WTC11 (cell line): ENCODE measurements at regions of chr15 and their contacts with region 1.

Region 1: GRCh38 chr15:91032919-91033803 is 10.8 kb upstream of the VPS33B start:
- DNase-seq: peak; percentile 92
- ATAC-seq: peak; percentile 94
- H3K4me3 Mint-ChIP-seq: peak overlapping the region; percentile 36
- H3K27ac Mint-ChIP-seq: peak overlapping the region; percentile 53; the same call in 1 of the 2 replicates
- H3K4me1 Mint-ChIP-seq: peaks cover 6% of the 10 kb centered on the region
- H3K27me3 Mint-ChIP-seq: peaks cover 11% of the 10 kb centered on the region
- CTCF ChIP-seq: peak; percentile 65

Region 2: GRCh38 chr15:90774731-90775484 is 258.3 kb before region 1 on chr15:
- CTCF ChIA-PET with region 1: no interaction called
- POLR2A ChIA-PET with region 1: no interaction called
- DNase-seq: no peak
- ATAC-seq: no peak
- H3K4me3 Mint-ChIP-seq: no peak overlapping the region
- H3K27ac Mint-ChIP-seq: no peak overlapping the region
- H3K4me1 Mint-ChIP-seq: no peaks in the 10 kb centered on the region
- H3K27me3 Mint-ChIP-seq: no peaks in the 10 kb centered on the region
- CTCF ChIP-seq: no peak

Region 3: GRCh38 chr15:90902040-90902839 is 130.9 kb before region 1 on chr15:
- CTCF ChIA-PET with region 1: interaction called, 14 read pairs
- POLR2A ChIA-PET with region 1: no interaction called
- DNase-seq: peak; percentile 78
- ATAC-seq: peak; percentile 77
- H3K4me3 Mint-ChIP-seq: peak overlapping the region; percentile 70
- H3K27ac Mint-ChIP-seq: peak overlapping the region; percentile 41; the same call in 1 of the 2 replicates
- H3K4me1 Mint-ChIP-seq: peaks cover 23% of the 10 kb centered on the region
- H3K27me3 Mint-ChIP-seq: peaks cover 26% of the 10 kb centered on the region
- CTCF ChIP-seq: no peak

Region 4: GRCh38 chr15:90986807-90987507 is 46.2 kb before region 1 on chr15:
- CTCF ChIA-PET with region 1: interaction called, 20 read pairs
- POLR2A ChIA-PET with region 1: no interaction called
- DNase-seq: no peak
- ATAC-seq: no peak
- H3K4me3 Mint-ChIP-seq: no peak overlapping the region
- H3K27ac Mint-ChIP-seq: peak overlapping the region; percentile 72; the same call in 1 of the 2 replicates
- H3K4me1 Mint-ChIP-seq: peaks cover 21% of the 10 kb centered on the region
- H3K27me3 Mint-ChIP-seq: no peaks in the 10 kb centered on the region
- CTCF ChIP-seq: no peak

Region 5: GRCh38 chr15:91022075-91022835 is 10.9 kb before region 1 on chr15 and contains the start of gene VPS33B:
- CTCF ChIA-PET with region 1: interaction called, 37 read pairs
- POLR2A ChIA-PET with region 1: interaction called, 5 read pairs
- DNase-seq: peak; percentile 82
- ATAC-seq: peak; percentile 92
- H3K4me3 Mint-ChIP-seq: peak within 1 kb of the TSS; percentile 88
- H3K27ac Mint-ChIP-seq: peak within 1 kb of the TSS; percentile 89
- H3K4me1 Mint-ChIP-seq: peaks cover 11% of the 10 kb centered on the region
- H3K27me3 Mint-ChIP-seq: no peaks in the 10 kb centered on the region
- CTCF ChIP-seq: no peak
- total RNA-seq, gene VPS33B: 18.1 to 21.1 TPM (median 20.7 TPM) in 3 replicates

Region 6: DNA sequence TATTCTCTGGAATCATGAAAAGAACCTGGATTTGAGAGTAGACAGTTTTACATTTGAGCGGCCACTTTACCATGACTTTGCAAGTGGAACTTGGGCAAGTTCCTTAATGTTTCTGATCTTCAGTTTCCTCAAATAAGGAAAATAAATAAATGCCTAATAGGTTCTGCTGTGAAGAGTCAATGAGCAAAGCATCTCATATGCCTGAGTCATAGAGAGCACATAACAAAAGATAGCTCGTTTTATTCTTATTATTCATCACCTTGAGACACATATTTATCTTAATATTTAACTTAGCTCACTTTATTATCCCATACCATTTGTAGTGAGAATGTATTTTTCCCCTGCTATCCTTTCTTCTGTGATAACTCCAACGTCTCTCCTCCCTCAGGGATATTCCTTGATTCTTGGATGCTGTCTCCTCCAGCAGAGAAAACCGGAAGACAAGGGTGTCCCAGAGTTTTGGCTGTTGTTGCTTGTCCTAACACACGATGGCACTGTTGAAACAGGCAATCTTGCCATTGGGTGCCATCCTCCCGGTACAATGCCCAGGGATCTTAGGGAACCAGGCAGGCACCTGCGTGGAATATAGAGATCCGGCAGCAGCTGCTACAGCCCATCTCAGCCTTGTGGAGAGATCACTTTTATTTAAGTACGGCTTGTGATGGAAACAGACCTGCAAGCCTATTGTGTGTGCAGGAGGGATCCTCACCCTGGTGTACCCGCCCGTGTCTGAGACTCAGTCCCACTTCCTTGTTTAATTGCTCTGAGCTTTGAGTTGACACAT is 22.6 kb after region 1 on chr15:
- CTCF ChIA-PET with region 1: interaction called, 14 read pairs
- POLR2A ChIA-PET with region 1: no interaction called
- DNase-seq: peak; percentile 74
- ATAC-seq: peak; percentile 98
- H3K4me3 Mint-ChIP-seq: peak overlapping the region; percentile 16; the same call in 1 of the 2 replicates
- H3K27ac Mint-ChIP-seq: no peak overlapping the region
- H3K4me1 Mint-ChIP-seq: peaks cover 2% of the 10 kb centered on the region; the same call in 1 of the 2 replicates
- H3K27me3 Mint-ChIP-seq: peaks cover 8% of the 10 kb centered on the region
- CTCF ChIP-seq: peak; percentile 46; the same call in 1 of the 2 replicates

Region 7: DNA sequence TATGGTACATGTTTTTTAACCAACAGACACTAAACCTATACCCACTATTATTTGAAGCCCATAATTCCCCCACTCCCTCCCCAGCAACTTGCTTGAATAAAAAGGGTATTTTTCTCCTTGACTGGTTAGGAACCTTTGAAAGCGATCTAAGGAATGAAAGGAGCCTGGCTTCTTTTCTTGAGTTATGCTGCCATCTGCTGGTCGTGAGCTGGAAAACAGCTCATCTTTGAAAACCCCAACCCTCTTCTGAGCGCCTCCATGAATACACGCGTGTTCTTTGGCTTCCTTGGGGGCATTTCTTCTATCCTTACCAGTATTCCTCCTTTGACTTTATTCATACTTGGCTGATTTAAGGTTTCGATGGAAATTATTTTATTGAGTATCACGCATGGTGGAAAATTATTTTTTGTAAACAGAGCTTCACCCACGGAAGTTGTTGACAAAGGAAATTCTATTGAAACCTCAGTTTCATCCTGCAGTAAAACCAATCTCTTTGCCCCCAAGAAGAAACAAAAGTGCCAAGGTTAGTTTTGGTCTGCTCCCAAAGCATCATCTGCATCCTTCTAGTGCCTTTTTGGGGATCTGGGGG is 238.5 kb after region 1 on chr15:
- CTCF ChIA-PET with region 1: interaction called, 16 read pairs
- POLR2A ChIA-PET with region 1: interaction called, 3 read pairs
- DNase-seq: peak; percentile 64
- ATAC-seq: peak; percentile 67; the same call in 1 of the 2 replicates
- H3K4me3 Mint-ChIP-seq: no peak overlapping the region
- H3K27ac Mint-ChIP-seq: no peak overlapping the region
- H3K4me1 Mint-ChIP-seq: no peaks in the 10 kb centered on the region
- H3K27me3 Mint-ChIP-seq: peaks cover 13% of the 10 kb centered on the region
- CTCF ChIP-seq: peak; percentile 69